ENCODE measurements at regions of chr9 and their contacts with region 1.

Region 1: DNA sequence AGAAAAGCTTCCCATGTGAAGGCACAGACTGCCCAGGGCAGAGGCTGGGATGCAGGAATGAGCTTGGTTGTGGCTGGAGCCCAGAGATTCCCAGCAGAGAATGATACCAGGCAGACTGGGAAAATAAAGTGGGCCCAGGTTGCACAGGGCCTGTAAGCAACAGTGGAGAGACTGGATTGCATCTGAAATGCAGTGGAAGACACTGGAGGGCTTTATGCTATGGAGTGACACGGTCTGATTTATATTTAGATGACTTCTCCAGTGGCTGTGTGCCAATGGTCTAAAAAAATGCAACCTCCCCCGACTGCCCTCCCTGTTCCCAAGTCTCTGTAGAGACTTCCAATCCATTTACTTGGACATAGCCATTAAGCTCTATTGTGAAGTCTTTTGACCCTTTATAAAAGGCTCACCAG is 951.1 kb upstream of the DMAC1 start:
- DNase-seq: no peak
- ATAC-seq: peak in 3 of 4 donors; percentile 36 to 49 (median 36)
- H3K4me3 ChIP-seq: peak overlapping the region in 1 of 12 donors; percentile 27
- H3K27ac ChIP-seq: no peak overlapping the region
- H3K4me1 ChIP-seq: peaks cover 0 to 11% (median 7%) of the 10 kb centered on the region in 12 donors
- H3K27me3 ChIP-seq: no peaks in the 10 kb centered on the region
- CTCF ChIP-seq: no peak
- POLR2A ChIP-seq: no peak

Region 2: GRCh38 chr9:7075154-7075553 is 1675.5 kb before region 1 on chr9:
- intact Hi-C with region 1: loop called in 1 of 10 experiments (anchors 10 kb)
- DNase-seq: no peak
- ATAC-seq: no peak
- H3K4me3 ChIP-seq: no peak overlapping the region
- H3K27ac ChIP-seq: no peak overlapping the region
- H3K4me1 ChIP-seq: peaks cover 0 to 4% (median 0%) of the 10 kb centered on the region in 12 donors
- H3K27me3 ChIP-seq: no peaks in the 10 kb centered on the region
- CTCF ChIP-seq: no peak
- POLR2A ChIP-seq: no peak

Region 3: DNA sequence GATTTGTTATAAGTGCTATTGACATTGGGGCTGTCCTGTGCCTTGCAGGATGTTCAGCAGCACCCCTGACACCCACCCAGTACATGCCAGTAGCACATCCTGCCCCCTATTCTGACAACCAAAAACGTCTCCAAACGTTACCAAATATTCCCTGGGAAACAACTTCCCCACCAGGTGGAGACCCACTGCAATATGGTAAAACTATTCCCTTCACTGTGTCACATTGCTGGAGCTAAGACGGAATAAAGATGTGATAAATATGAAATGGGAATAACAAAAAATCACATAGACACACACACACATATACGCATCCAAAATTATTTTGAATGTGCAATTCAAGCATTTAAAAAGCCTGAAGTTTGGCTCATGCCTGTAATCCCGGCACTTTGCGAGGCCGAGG is 76.8 kb before region 1 on chr9:
- intact Hi-C with region 1: no loop called
- DNase-seq: no peak
- ATAC-seq: no peak
- H3K4me3 ChIP-seq: no peak overlapping the region
- H3K27ac ChIP-seq: no peak overlapping the region
- H3K4me1 ChIP-seq: peaks cover 0 to 16% (median 4%) of the 10 kb centered on the region in 12 donors
- H3K27me3 ChIP-seq: no peaks in the 10 kb centered on the region
- CTCF ChIP-seq: no peak
- POLR2A ChIP-seq: no peak

Region 4: GRCh38 chr9:8816361-8816760 is 65.7 kb after region 1 on chr9:
- intact Hi-C with region 1: loop called in 1 of 10 experiments (anchors 10 kb)
- DNase-seq: no peak
- ATAC-seq: no peak
- H3K4me3 ChIP-seq: no peak overlapping the region
- H3K27ac ChIP-seq: no peak overlapping the region
- H3K4me1 ChIP-seq: no peaks in the 10 kb centered on the region
- H3K27me3 ChIP-seq: no peaks in the 10 kb centered on the region
- CTCF ChIP-seq: no peak
- POLR2A ChIP-seq: no peak

Region 5: GRCh38 chr9:9670454-9670853 is 919.8 kb after region 1 on chr9:
- intact Hi-C with region 1: no loop called
- DNase-seq: peak in 1 of 5 donors; percentile 24
- ATAC-seq: no peak
- H3K4me3 ChIP-seq: no peak overlapping the region
- H3K27ac ChIP-seq: no peak overlapping the region
- H3K4me1 ChIP-seq: no peaks in the 10 kb centered on the region
- H3K27me3 ChIP-seq: no peaks in the 10 kb centered on the region
- CTCF ChIP-seq: no peak
- POLR2A ChIP-seq: no peak